Tibial artery (tissue), 4 donors: ENCODE measurements at regions of chr3 and their contacts with region 1.

Region 1: DNA sequence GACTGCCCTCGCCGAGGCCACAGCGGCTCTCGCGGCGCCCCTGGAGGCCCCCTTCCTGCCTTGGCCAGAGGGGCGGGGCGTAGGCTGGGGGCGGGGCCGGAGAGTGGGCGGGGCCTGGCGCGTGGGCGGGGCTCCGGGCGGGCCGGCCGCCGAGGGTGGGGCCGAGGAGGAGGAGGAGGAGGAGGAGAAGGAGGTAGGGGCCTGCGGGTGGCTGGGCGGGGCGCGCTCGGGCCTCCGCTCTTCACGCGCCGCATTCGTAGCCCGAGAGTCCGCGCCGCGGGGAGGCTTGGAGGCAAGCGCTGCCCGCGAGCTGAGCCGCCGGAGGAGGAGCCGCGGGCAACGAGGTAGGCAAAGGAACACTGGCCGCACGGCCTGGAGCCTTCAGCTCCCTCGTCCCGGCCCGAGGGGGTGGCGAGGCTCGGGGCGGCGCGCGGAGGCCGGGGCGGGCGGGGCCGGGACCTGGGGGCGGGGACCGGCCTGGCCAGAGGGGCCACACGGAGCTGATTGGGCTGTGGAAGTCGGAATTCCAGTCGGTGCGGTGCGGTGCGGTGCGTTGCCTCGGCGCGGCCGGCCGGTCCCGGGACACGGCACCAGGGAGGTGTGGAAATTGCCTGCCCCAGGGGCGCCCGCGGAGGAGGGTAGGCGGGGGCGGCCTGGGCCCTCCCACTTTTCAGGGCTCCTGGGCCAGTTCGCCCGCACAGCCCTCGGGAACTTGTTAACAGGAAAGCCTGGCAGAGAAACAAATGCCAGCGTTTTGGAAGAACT is at the start of gene PPP2R3A:
- DNase-seq: peak; percentile 76 to 95
- H3K4me3 ChIP-seq: peak within 1 kb of the TSS; percentile 74 to 89
- H3K27ac ChIP-seq: peak within 1 kb of the TSS; percentile 93 to 98
- H3K4me1 ChIP-seq: peaks cover 0 to 34% (median 14%) of the 10 kb centered on the region in 4 donors
- H3K27me3 ChIP-seq: no peaks in the 10 kb centered on the region
- CTCF ChIP-seq: no peak

Region 2: GRCh38 chr3:136250226-136250902 is 284.7 kb after region 1 on chr3 and contains the start of gene PCCB:
- intact Hi-C with region 1: loop called (anchors 10 kb)
- DNase-seq: peak; percentile 91 to 95
- H3K4me3 ChIP-seq: peak within 1 kb of the TSS; percentile 73 to 81
- H3K27ac ChIP-seq: peak within 1 kb of the TSS; percentile 83 to 86
- H3K4me1 ChIP-seq: peaks cover 0 to 15% (median 6%) of the 10 kb centered on the region in 4 donors
- H3K27me3 ChIP-seq: no peaks in the 10 kb centered on the region
- CTCF ChIP-seq: peak; percentile 80 to 91